ENCODE measurements at regions of chr14 and their contacts with region 1.

Region 1: DNA sequence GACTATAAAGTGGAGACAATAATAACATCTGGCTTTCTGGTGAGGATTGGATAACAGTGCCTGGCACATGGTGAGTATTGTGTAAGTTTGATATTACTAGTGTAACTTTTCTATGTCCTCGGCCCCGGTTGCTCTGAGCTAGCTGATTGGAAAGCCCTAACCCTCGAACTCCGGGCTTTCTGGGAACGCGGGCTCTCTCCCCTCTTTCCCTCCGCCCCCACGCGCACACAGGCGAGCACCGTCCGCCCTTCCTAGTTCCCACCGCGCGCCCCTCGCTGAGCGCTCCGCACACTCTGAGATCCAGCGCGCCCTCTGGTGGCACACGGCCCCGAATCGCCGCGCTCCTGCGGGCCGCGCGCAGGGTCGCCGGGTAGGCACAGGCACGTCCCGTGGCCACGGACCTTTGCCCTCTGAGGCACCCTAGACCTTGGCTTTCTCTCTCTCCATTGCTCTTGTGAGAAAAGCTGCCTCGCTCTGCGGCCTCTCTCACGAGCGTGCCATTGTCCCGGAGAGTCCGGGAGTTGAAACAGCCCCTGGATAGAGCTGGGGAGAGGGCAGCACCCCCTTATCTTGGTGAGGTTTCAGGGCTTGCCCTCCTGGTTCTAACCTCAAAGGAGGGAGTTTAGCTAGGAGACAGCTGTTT is 23.2 kb upstream of the ESRRB start:
- DNase-seq: peak; percentile 37
- H3K4me3 ChIP-seq: no peak overlapping the region
- H3K27ac ChIP-seq: no peak overlapping the region
- H3K4me1 ChIP-seq: peaks cover 18% of the 10 kb centered on the region
- H3K27me3 ChIP-seq: peaks cover 0 to 7% of the 10 kb centered on the region in 2 experiments
- CTCF ChIP-seq: peak; percentile 88 to 93
- POLR2A ChIP-seq: no peak

Region 2: DNA sequence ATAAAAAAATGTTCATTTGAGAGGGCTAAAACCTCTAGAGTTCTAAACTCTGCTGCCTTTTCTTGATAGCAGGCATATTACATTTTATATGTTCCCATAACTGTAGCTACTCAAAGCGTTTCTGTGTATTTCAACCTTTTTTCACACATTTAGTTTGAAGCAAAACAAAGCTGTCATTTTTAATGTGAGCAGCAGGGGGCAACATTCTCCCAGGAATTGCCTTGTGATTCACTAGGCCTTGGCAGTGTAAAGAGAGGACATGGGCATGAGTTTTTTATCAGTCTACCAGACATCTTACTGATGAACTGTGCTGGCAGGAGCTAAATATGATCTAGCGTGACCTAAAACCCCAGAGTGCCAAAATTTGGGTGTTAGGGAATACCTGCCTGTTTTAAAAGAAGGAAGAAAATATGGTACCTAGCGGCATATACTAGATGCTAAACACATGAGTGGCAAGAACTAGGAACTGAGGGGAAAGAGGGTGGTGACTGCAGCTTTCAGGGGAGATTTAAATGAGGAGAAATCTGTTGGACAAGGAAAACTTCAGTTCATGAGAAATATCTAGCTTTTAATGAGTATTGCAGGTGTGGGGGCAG is 301.9 kb before region 1 on chr14:
- CTCF ChIA-PET with region 1: interaction called, 141 read pairs
- POLR2A ChIA-PET with region 1: no interaction called
- dilution Hi-C with region 1: no loop called
- intact Hi-C with region 1: loop called (anchors 1 kb)
- DNase-seq: peak; percentile 72
- H3K4me3 ChIP-seq: no peak overlapping the region
- H3K27ac ChIP-seq: no peak overlapping the region
- H3K4me1 ChIP-seq: no peaks in the 10 kb centered on the region
- H3K27me3 ChIP-seq: no peaks in the 10 kb centered on the region
- CTCF ChIP-seq: peak; percentile 51 to 69
- POLR2A ChIP-seq: no peak

Region 3: GRCh38 chr14:76126076-76126475 is 226.7 kb before region 1 on chr14:
- CTCF ChIA-PET with region 1: interaction called, 30 read pairs
- POLR2A ChIA-PET with region 1: no interaction called
- dilution Hi-C with region 1: no loop called
- intact Hi-C with region 1: no loop called
- DNase-seq: no peak
- H3K4me3 ChIP-seq: no peak overlapping the region
- H3K27ac ChIP-seq: no peak overlapping the region
- H3K4me1 ChIP-seq: no peaks in the 10 kb centered on the region
- H3K27me3 ChIP-seq: peaks cover 8 to 10% of the 10 kb centered on the region in 2 experiments
- CTCF ChIP-seq: no peak
- POLR2A ChIP-seq: no peak

Region 4: GRCh38 chr14:76181546-76181945 is 171.2 kb before region 1 on chr14:
- CTCF ChIA-PET with region 1: interaction called, 10 read pairs
- POLR2A ChIA-PET with region 1: no interaction called
- dilution Hi-C with region 1: no loop called
- intact Hi-C with region 1: no loop called
- DNase-seq: peak; percentile 7
- H3K4me3 ChIP-seq: no peak overlapping the region
- H3K27ac ChIP-seq: no peak overlapping the region
- H3K4me1 ChIP-seq: no peaks in the 10 kb centered on the region
- H3K27me3 ChIP-seq: no peaks in the 10 kb centered on the region
- CTCF ChIP-seq: peak; percentile 8 to 21
- POLR2A ChIP-seq: no peak

Region 5: DNA sequence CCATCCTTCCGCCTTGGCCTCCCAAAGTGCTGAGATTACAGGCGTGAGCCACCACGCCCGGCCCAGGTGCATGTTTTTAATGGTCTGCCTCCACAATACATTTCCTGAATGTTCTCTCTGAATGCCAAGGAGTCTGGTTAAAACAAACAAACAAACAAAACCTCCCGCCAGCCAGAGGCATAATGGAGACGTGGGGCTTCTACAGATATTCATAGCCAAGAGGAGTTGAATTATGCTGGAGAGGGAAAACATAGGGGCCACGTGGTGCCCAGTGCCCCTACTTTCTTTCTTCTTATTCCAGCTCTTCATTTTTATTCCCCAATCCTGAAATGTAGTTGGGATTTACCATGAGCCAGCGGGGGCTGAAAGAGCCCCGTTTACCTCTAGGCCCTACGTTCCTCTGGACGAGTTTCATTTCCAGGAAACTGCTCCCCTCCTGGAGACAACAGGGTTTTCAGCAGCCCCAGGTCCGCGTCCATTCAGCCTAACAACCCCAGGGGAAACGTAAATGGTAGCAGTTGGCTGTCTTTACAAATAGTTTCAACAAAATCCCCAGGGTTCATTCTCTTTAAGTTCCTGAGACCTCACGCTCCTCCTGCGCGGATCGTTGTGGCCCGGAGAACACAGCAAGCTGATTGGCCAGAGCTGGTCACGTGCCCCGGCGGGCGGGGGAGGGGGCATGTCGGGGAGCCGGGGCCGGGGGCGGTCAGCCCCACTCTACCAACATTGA is 85.3 kb before region 1 on chr14:
- CTCF ChIA-PET with region 1: no interaction called
- POLR2A ChIA-PET with region 1: no interaction called
- dilution Hi-C with region 1: no loop called
- intact Hi-C with region 1: loop called (anchors 5 kb)
- DNase-seq: peak; percentile 55
- H3K4me3 ChIP-seq: peak overlapping the region; percentile 2 to 46 (median 34)
- H3K27ac ChIP-seq: no peak overlapping the region
- H3K4me1 ChIP-seq: no peaks in the 10 kb centered on the region
- H3K27me3 ChIP-seq: peaks cover 2 to 6% of the 10 kb centered on the region in 2 experiments
- CTCF ChIP-seq: no peak
- POLR2A ChIP-seq: no peak

Region 6: GRCh38 chr14:76386915-76387782 is 34.4 kb after region 1 on chr14:
- CTCF ChIA-PET with region 1: interaction called, 11 read pairs
- POLR2A ChIA-PET with region 1: no interaction called
- dilution Hi-C with region 1: no loop called
- intact Hi-C with region 1: loop called (anchors 2 kb)
- DNase-seq: peak; percentile 63
- H3K4me3 ChIP-seq: no peak overlapping the region
- H3K27ac ChIP-seq: no peak overlapping the region
- H3K4me1 ChIP-seq: no peaks in the 10 kb centered on the region
- H3K27me3 ChIP-seq: peaks cover 21 to 39% of the 10 kb centered on the region in 2 experiments
- CTCF ChIP-seq: peak; percentile 98
- POLR2A ChIP-seq: no peak

Region 7: DNA sequence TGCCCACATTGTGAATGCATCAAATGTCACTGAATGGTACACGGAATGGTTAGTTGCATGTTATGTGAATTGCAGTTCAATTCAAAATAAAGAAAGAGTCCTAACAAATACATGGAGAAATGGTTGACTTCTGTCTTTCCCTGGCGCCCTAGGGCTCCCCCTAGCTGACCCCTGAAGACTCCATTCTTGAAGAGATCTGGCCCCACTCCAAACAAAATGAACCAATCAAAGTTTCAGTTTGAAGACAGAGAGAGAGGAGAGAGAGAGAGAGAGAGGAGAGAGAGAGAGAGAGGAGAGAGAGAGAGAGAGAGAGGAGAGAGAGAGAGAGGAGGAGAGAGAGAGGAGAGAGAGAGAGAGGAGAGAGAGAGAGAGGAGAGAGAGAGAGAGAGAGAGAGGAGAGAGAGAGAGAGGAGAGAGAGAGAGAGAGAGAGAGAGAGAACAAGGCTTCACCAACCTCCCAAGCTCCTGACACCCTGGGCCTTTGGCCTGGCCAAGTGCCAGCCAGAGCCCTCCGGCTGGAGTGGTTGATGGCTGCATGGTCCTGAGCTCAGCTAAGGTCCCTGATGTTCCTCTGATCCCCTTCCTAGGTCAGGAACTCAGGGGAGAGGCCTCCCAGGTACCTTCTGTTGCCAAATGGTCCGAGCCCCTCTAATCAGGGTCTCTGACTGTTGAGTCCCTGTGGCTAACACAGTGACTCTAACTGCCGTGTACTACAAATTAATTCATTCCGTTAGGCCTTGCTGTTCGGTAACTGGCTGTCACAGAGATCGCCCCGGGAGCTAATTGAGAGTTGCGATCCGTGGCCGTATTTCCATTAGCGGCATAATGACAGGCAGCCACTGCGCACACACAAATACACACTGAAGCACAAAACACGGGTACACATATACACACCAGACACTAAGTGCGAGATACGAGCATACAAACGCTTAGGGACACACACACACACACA is 212.0 kb after region 1 on chr14:
- CTCF ChIA-PET with region 1: no interaction called
- POLR2A ChIA-PET with region 1: no interaction called
- dilution Hi-C with region 1: no loop called
- intact Hi-C with region 1: no loop called
- DNase-seq: no peak
- H3K4me3 ChIP-seq: no peak overlapping the region
- H3K27ac ChIP-seq: no peak overlapping the region
- H3K4me1 ChIP-seq: no peaks in the 10 kb centered on the region
- H3K27me3 ChIP-seq: no peaks in the 10 kb centered on the region
- CTCF ChIP-seq: no peak
- POLR2A ChIP-seq: no peak

Measured in endothelial cell of umbilical vein (primary cell).